ENCODE measurements at regions of chr5 and their contacts with region 1.

Region 1: GRCh38 chr5:141701360-141702119 is 19.5 kb upstream of the ARAP3 start:
- DNase-seq: no peak
- ATAC-seq: no peak
- H3K4me3 Mint-ChIP-seq: no peak overlapping the region; the same call in 1 of the 2 replicates
- H3K27ac Mint-ChIP-seq: no peak overlapping the region
- H3K4me1 Mint-ChIP-seq: peaks cover 22% of the 10 kb centered on the region
- H3K27me3 Mint-ChIP-seq: peaks cover 6% of the 10 kb centered on the region
- CTCF ChIP-seq: no peak

Region 2: GRCh38 chr5:141672848-141673813 is 28.4 kb before region 1 on chr5:
- CTCF ChIA-PET with region 1: interaction called, 10 read pairs
- POLR2A ChIA-PET with region 1: no interaction called
- DNase-seq: no peak
- ATAC-seq: peak; percentile 2; the same call in 1 of the 2 replicates
- H3K4me3 Mint-ChIP-seq: no peak overlapping the region
- H3K27ac Mint-ChIP-seq: peak overlapping the region; percentile 42
- H3K4me1 Mint-ChIP-seq: peaks cover 32% of the 10 kb centered on the region
- H3K27me3 Mint-ChIP-seq: no peaks in the 10 kb centered on the region
- CTCF ChIP-seq: no peak

Region 3: DNA sequence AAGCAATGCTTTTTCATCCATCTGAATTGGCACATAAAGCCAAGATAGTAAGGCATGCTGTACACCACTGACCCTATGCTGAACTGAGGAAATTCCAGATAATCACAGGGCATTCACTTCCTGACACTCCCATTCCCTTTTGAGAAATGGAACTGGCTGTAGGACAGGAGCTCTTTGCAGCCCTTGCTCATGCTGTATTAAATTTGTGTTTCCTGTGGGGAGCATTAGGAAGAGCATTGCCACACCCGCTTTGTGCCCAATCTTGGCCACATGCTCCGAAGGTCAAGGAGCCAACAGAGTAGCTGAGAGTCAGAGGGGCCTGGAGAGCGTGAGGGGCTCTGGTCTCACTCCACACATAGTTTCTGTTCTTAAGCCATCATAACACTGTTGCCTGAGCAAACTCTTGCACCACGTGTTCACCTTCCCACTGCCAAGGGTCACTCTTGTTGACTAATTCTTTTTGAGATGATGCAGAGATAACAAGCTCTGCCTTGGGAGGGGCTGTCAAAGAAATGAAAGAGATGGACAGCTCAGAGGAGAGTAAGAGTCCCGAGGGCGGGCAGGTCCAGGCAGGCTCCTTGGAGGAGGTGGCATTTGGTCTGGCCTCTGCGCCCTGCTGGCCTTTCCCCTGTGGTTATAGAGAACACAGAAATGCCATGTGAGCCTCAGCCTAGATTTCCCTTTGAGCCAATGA is 12.2 kb after region 1 on chr5:
- CTCF ChIA-PET with region 1: interaction called, 19 read pairs
- POLR2A ChIA-PET with region 1: no interaction called
- DNase-seq: no peak
- ATAC-seq: no peak
- H3K4me3 Mint-ChIP-seq: no peak overlapping the region
- H3K27ac Mint-ChIP-seq: no peak overlapping the region
- H3K4me1 Mint-ChIP-seq: peaks cover 47% of the 10 kb centered on the region
- H3K27me3 Mint-ChIP-seq: no peaks in the 10 kb centered on the region
- CTCF ChIP-seq: no peak

Region 4: GRCh38 chr5:141805874-141806595 is 104.5 kb after region 1 on chr5:
- CTCF ChIA-PET with region 1: interaction called, 36 read pairs
- POLR2A ChIA-PET with region 1: no interaction called
- DNase-seq: no peak
- ATAC-seq: no peak
- H3K4me3 Mint-ChIP-seq: no peak overlapping the region
- H3K27ac Mint-ChIP-seq: peak overlapping the region; percentile 56; the same call in 1 of the 2 replicates
- H3K4me1 Mint-ChIP-seq: peaks cover 75% of the 10 kb centered on the region
- H3K27me3 Mint-ChIP-seq: peaks cover 3% of the 10 kb centered on the region; the same call in 1 of the 2 replicates
- CTCF ChIP-seq: no peak

Region 5: GRCh38 chr5:141835928-141836670 is 134.6 kb after region 1 on chr5:
- CTCF ChIA-PET with region 1: interaction called, 16 read pairs
- POLR2A ChIA-PET with region 1: no interaction called
- DNase-seq: no peak
- ATAC-seq: peak; percentile 5; the same call in 1 of the 2 replicates
- H3K4me3 Mint-ChIP-seq: peak overlapping the region; percentile 29; the same call in 1 of the 2 replicates
- H3K27ac Mint-ChIP-seq: peak overlapping the region; percentile 96
- H3K4me1 Mint-ChIP-seq: peaks cover 76% of the 10 kb centered on the region
- H3K27me3 Mint-ChIP-seq: peaks cover 8% of the 10 kb centered on the region
- CTCF ChIP-seq: no peak

Region 6: GRCh38 chr5:141849375-141850243 is 148.1 kb after region 1 on chr5:
- CTCF ChIA-PET with region 1: interaction called, 14 read pairs
- POLR2A ChIA-PET with region 1: no interaction called
- DNase-seq: peak; percentile 94
- ATAC-seq: peak; percentile 47
- H3K4me3 Mint-ChIP-seq: peak overlapping the region; percentile 73
- H3K27ac Mint-ChIP-seq: peak overlapping the region; percentile 99
- H3K4me1 Mint-ChIP-seq: peaks cover 68% of the 10 kb centered on the region
- H3K27me3 Mint-ChIP-seq: no peaks in the 10 kb centered on the region
- CTCF ChIP-seq: no peak

Region 7: DNA sequence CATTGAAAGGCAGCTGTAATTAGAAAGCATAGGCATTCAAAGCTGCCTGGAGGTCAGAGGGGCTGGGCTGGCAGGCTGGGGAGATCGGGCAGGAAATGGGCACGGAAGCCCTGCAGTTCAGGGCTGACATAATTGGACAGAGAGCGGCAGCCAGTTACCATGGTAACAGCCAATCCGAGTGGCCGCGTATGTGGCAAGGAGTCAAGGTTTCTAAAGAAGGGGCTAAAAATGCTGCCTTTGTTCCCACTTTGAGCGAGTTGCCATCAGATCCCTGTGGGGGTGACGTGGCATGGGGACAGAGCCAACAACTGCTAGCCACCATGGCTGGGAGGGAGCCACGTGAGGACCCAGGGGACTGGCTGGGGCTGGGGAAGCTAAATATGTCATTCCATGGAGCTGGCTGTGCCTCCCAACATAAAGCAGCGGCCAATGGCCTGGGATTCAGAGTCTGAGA is 362.4 kb after region 1 on chr5:
- CTCF ChIA-PET with region 1: no interaction called
- POLR2A ChIA-PET with region 1: no interaction called
- DNase-seq: peak; percentile 44
- ATAC-seq: peak; percentile 74
- H3K4me3 Mint-ChIP-seq: peak overlapping the region; percentile 48
- H3K27ac Mint-ChIP-seq: no peak overlapping the region
- H3K4me1 Mint-ChIP-seq: peaks cover 11% of the 10 kb centered on the region
- H3K27me3 Mint-ChIP-seq: no peaks in the 10 kb centered on the region
- CTCF ChIP-seq: no peak